ENCODE measurements at regions of chr1 and their contacts with region 1.

Region 1: DNA sequence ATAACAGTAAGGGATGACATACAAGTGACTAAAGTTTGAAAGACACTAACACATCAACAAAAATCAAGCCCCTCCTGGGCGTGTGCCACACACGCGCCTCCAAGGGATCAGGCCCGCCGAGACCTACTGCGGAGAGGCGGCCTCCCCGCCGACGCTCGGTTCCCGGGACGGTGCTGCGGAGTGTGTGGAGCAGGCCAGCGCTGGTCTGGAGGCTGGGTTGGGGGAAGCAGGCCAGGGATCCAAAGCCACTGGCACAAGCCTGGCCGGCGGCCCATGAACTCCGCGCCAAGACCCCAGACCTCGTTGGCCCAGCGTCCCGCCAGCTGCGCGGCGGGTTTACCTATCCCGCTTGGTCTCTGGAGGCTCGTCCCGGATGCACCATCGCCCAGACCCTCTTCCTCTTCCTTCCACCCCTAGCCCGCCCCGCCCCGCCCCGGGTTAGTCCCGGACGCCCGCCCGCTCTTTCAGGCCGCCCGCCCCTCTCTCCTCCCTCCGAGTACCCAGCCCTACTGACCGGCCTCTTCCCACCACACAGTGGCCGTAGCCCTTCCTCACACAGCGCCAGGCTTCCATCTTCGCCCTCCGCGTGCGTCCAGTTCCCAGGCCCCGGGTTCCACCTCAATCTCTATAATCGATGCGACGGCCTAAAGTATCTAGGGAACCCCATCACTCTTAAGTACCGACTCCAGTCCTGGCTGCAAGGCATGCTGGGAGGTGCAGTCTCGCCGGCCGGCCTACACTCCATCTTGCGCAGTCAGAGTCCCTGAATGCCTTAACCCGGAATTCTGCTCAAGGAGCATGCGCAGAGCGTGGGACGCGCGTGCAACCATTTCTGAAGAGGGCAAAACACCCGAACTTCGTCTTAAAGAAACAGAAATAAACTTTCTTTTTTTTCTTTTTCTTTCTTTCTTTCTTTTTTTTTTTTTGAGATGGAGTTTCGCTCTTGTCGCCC is at the start of gene ANGEL2:
- DNase-seq: peak; percentile 98
- H3K4me3 ChIP-seq: peak within 1 kb of the TSS; percentile 88
- H3K27ac ChIP-seq: peak within 1 kb of the TSS; percentile 73
- H3K4me1 ChIP-seq: peaks cover 23% of the 10 kb centered on the region
- CTCF ChIP-seq: no peak
- total RNA-seq, gene ANGEL2: 24.1 and 40.1 TPM in 2 replicates

Region 2: DNA sequence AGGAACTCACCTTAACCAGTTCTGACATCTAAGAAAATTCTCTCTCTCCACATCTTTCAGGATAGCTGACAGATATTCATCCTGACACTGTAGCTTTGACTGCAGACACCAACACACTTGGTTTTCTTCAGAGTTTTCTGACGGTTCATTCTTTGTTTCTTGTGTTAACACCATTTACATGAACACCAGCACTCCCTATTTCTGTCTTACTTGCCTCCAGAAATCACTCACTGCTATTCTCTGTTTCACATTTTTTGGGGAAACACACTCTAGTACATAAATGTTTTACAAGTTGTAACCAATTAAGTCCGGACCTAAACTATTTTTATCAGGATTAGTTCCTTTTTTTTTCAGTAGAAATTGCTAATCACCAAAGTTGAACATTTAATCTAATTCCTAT is 141.9 kb before region 1 on chr1:
- CTCF ChIA-PET with region 1: no interaction called
- POLR2A ChIA-PET with region 1: no interaction called
- intact Hi-C with region 1: no loop called
- DNase-seq: no peak
- H3K4me3 ChIP-seq: no peak overlapping the region
- H3K27ac ChIP-seq: no peak overlapping the region
- H3K4me1 ChIP-seq: no peaks in the 10 kb centered on the region
- CTCF ChIP-seq: no peak

Region 3: DNA sequence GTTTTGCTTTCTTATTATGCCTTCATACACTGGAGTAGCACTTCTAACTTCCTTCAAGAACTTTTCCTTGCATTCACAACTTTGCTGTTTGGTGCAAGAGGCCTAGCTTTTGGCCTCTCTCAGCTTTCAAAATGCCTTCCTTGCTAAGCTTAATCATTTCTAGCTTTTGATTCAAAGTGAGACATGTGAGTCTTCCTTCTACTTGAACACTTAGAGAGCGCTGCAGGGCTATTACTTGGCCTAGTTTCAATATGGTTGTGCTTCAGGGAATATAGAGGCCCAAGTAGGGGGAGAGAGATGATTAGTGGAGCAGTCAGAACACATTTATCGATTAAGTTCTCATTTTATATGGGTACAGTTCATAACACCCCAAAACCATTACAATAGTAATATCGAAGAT is 12.1 kb before region 1 on chr1:
- CTCF ChIA-PET with region 1: no interaction called
- POLR2A ChIA-PET with region 1: interaction called, 15 read pairs
- intact Hi-C with region 1: no loop called
- DNase-seq: no peak
- H3K4me3 ChIP-seq: no peak overlapping the region
- H3K27ac ChIP-seq: no peak overlapping the region
- H3K4me1 ChIP-seq: no peaks in the 10 kb centered on the region
- CTCF ChIP-seq: no peak

Region 4: DNA sequence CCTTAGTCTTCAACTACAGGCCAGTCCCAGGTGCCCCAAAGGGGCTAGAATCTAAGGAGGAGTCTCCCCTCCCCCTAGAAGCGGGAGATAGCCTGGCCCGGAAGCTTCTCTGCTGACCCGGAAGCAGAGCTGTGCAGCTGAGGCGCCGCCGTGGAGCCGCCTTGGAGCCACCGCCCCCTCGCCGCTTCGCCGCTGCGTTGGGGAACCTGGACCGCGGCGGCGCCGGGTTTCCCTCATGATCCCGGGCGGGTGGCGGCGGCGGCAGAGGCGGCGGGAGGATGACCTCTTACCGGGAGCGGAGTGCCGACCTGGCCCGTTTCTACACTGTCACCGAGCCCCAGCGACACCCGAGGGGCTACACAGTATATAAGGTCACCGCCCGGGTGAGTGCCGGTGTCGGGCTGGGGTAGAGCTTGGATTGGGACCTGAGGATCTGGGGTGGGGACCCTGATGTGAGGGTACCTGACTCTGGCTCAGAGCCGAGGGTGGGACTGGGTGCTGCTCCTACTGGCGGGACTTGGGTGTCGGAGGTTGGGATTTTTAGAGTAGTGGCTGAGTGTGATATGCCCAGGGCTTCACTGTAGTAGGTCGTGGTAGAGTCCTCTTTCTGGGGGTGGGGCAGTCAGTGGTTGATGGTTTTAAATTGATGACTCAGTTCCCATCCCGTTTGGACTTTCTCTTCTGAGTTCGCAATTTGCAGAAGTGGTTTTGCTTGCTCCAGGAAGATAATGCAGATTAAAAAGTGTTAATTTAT is 35.9 kb after region 1 on chr1 and contains the start of gene RPS6KC1:
- CTCF ChIA-PET with region 1: interaction called, 3 read pairs
- POLR2A ChIA-PET with region 1: interaction called, 3 read pairs
- intact Hi-C with region 1: loop called (anchors 1 kb)
- DNase-seq: peak; percentile 86
- H3K4me3 ChIP-seq: peak within 1 kb of the TSS; percentile 88
- H3K27ac ChIP-seq: no peak within 1 kb of the TSS
- H3K4me1 ChIP-seq: peaks cover 12% of the 10 kb centered on the region
- CTCF ChIP-seq: peak; percentile 35; the same call in 1 of the 2 replicates
- total RNA-seq, gene RPS6KC1: 5.9 and 10.7 TPM in 2 replicates